ENCODE measurements at regions of chr4 and their contacts with region 1.

Region 1: GRCh38 chr4:112604589-112604988 is 32.1 kb downstream of the ZGRF1 start:
- DNase-seq: peak; percentile 44
- H3K4me3 Mint-ChIP-seq: no peak overlapping the region
- H3K27ac Mint-ChIP-seq: no peak overlapping the region
- H3K4me1 Mint-ChIP-seq: no peaks in the 10 kb centered on the region
- H3K27me3 Mint-ChIP-seq: no peaks in the 10 kb centered on the region

Region 2: DNA sequence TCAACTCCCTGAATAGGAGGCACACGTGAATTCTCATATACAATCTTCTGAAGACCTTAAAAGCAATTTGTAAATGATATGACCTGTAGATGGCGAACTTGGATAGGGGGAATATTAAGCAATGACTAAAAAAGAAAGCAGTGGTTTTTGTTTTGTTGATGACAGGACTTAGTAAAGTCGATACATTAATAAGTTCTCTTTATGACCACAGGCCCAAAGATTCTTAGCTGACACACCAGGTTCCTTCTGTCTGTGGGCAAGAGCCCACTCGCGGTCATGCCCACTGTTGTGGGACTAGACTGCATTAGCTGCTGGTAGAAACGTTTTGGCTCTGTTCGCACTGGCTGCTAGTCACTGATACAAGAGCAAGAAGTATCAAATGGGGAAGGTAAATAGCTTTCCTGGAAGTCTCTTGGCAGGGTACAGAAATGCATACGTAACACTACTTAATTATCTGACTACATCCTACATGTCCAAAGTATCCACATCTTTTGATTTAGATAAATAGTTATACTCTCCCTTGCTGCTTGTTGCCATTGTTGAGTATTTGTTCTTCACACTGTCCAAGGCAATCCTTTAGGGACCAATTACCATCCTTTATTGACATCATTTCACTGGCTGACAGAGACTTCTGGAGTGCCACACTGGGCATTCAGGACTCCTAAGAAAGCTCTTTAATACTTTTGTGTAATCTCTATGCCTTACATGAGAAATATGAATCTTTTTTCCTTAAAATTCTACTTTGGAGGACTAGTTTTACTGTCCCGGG is 276.4 kb before region 1 on chr4:
- CTCF ChIA-PET with region 1: no interaction called
- intact Hi-C with region 1: loop called (anchors 1 kb)
- DNase-seq: no peak
- H3K4me3 Mint-ChIP-seq: no peak overlapping the region
- H3K27ac Mint-ChIP-seq: no peak overlapping the region
- H3K4me1 Mint-ChIP-seq: no peaks in the 10 kb centered on the region
- H3K27me3 Mint-ChIP-seq: no peaks in the 10 kb centered on the region

Region 3: GRCh38 chr4:112807083-112807482 is 202.5 kb after region 1 on chr4:
- CTCF ChIA-PET with region 1: no interaction called
- intact Hi-C with region 1: no loop called
- DNase-seq: no peak
- H3K4me3 Mint-ChIP-seq: no peak overlapping the region
- H3K27ac Mint-ChIP-seq: no peak overlapping the region
- H3K4me1 Mint-ChIP-seq: no peaks in the 10 kb centered on the region
- H3K27me3 Mint-ChIP-seq: peaks cover 3% of the 10 kb centered on the region

Region 4: GRCh38 chr4:112910109-112910736 is 305.6 kb after region 1 on chr4:
- CTCF ChIA-PET with region 1: no interaction called
- intact Hi-C with region 1: no loop called
- DNase-seq: no peak
- H3K4me3 Mint-ChIP-seq: no peak overlapping the region
- H3K27ac Mint-ChIP-seq: no peak overlapping the region
- H3K4me1 Mint-ChIP-seq: peaks cover 7% of the 10 kb centered on the region
- H3K27me3 Mint-ChIP-seq: peaks cover 6% of the 10 kb centered on the region